H1 (cell line): ENCODE measurements at regions of chr19 and their contacts with region 1.

Region 1: GRCh38 chr19:11380653-11381534 is 3.2 kb downstream of the EPOR start:
- DNase-seq: peak; percentile 93 to 95
- H3K4me3 ChIP-seq: peak overlapping the region; percentile 55 to 79 (median 69)
- H3K27ac ChIP-seq: peak overlapping the region; percentile 76; the same call in 1 of the 2 replicates
- H3K4me1 ChIP-seq: peaks cover 0 to 11% (median 5%) of the 10 kb centered on the region in 4 experiments; a peak in 5 of 7 replicates
- H3K27me3 ChIP-seq: no peaks in the 10 kb centered on the region
- CTCF ChIP-seq: peak; percentile 60 to 71 (median 67)
- EP300 ChIP-seq: no peak; a peak in 1 of 3 replicates
- POLR2A ChIP-seq: peak; percentile 81 to 85
- RAD21 ChIP-seq: peak; percentile 50 to 66

Region 2: DNA sequence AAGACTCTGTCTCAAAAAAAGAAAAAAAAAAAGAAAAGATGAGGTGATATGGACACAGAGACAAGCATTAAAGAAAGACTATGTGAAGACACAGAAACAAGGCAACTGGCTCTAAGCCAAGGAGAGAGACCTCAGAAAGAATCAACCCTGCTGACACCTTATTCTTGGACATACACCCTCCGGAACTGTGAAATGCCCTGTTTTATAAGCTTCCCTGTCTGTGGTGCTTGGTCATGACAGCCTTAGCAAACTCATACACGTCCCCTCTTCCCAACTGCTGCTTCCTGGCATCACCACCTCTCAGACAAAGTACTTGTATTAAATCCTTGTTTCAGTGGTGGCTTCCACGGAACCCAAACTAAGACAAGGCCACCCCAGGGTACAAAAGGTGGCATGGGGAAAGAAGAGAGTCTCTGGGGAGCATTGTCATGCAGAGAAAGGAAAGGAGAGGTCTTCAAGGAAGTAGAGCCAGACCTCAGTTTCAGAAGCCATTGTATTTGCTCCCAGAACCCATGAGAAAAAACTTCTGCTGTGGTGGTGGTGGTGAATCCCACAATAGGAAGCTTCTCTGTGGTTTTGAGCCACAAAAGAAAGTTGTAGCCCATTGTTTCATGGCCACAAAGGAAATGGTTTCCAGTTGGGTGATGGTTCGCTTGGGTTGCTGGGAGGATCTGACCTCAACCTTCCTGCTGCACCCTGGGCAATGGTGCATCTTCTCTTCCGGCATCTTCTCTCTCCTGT is 101.2 kb before region 1 on chr19:
- CTCF ChIA-PET with region 1: no interaction called
- POLR2A ChIA-PET with region 1: no interaction called
- DNase-seq: no peak
- H3K4me3 ChIP-seq: no peak overlapping the region
- H3K27ac ChIP-seq: no peak overlapping the region
- H3K4me1 ChIP-seq: peaks cover 0 to 4% (median 2%) of the 10 kb centered on the region in 4 experiments; a peak in 4 of 7 replicates
- H3K27me3 ChIP-seq: no peaks in the 10 kb centered on the region
- CTCF ChIP-seq: no peak
- EP300 ChIP-seq: no peak
- POLR2A ChIP-seq: no peak
- RAD21 ChIP-seq: no peak

Region 3: GRCh38 chr19:11293433-11294389 is 87.2 kb before region 1 on chr19:
- CTCF ChIA-PET with region 1: interaction called, 20 read pairs
- POLR2A ChIA-PET with region 1: interaction called, 3 read pairs
- DNase-seq: peak; percentile 88 to 100
- H3K4me3 ChIP-seq: peak overlapping the region in 2 of 4 experiments; percentile 21 to 44; a peak in 4 of 8 replicates
- H3K27ac ChIP-seq: no peak overlapping the region
- H3K4me1 ChIP-seq: peaks cover 2 to 6% (median 2%) of the 10 kb centered on the region in 4 experiments; a peak in 5 of 7 replicates
- H3K27me3 ChIP-seq: no peaks in the 10 kb centered on the region; a peak in 2 of 7 replicates
- CTCF ChIP-seq: peak; percentile 92 to 97 (median 93)
- EP300 ChIP-seq: no peak
- POLR2A ChIP-seq: no peak
- RAD21 ChIP-seq: peak; percentile 92 to 94

Region 4: GRCh38 chr19:11339254-11340098 is 41.4 kb before region 1 on chr19 and contains the start of gene RAB3D:
- CTCF ChIA-PET with region 1: interaction called, 8 read pairs
- POLR2A ChIA-PET with region 1: interaction called, 13 read pairs
- DNase-seq: peak; percentile 79 to 94
- H3K4me3 ChIP-seq: peak within 1 kb of the TSS; percentile 47 to 77 (median 62)
- H3K27ac ChIP-seq: no peak within 1 kb of the TSS
- H3K4me1 ChIP-seq: peaks cover 0 to 4% (median 1%) of the 10 kb centered on the region in 4 experiments; a peak in 4 of 7 replicates
- H3K27me3 ChIP-seq: no peaks in the 10 kb centered on the region; a peak in 2 of 7 replicates
- CTCF ChIP-seq: no peak
- EP300 ChIP-seq: no peak
- POLR2A ChIP-seq: peak in 1 of 2 experiments; percentile 60; a peak in 2 of 3 replicates
- RAD21 ChIP-seq: 0 out of 4 replicates have a peak, but pooled peaks of 1 of the 2 experiments have one; percentile 3
- total RNA-seq, gene RAB3D: 23.8 and 24.4 TPM in 2 replicates

Region 5: GRCh38 chr19:11393786-11394185 is 12.9 kb after region 1 on chr19:
- CTCF ChIA-PET with region 1: interaction called, 23 read pairs
- POLR2A ChIA-PET with region 1: interaction called, 16 read pairs
- DNase-seq: no peak
- H3K4me3 ChIP-seq: no peak overlapping the region
- H3K27ac ChIP-seq: no peak overlapping the region
- H3K4me1 ChIP-seq: peaks cover 0 to 2% (median 0%) of the 10 kb centered on the region in 4 experiments; a peak in 1 of 7 replicates
- H3K27me3 ChIP-seq: no peaks in the 10 kb centered on the region
- CTCF ChIP-seq: no peak
- EP300 ChIP-seq: no peak
- POLR2A ChIP-seq: no peak
- RAD21 ChIP-seq: no peak

Region 6: DNA sequence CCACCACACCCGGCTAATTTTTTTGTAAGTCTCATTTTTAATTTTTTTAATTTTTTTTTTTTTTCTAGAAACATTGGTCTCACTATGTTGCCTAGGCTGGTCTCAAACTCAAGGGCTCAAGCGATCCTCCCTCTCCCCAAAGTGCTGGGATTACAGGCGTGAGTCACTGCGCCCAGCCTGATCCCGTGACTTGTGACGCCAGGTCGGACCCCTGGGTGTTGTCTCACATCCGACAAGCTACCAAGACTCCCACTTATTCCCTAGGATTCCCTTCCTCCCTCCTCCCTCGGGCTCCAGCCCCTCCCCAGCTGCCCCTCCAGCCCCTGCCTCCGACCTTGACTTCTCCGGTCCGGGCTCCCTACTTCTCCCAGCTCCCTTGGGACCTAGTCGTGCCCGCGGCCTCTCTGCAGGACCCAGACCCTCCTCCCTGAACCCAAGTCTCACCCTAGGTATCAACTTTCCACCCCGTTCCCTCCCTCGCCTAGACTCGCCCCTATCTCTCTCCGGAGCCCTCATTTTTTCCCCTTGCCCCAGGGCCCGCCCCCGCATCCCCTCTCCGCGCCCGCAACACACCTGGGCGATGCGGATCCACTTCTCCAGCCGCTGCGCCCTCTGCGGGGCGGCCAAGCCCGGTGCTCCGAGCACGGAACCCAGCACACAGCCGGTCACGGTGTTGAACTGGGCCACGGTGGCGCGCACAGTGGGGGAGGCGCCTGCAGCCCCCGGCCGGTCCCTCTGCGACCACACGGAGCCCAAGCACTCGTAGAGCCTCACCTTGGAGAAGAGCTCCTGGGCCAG is 25.2 kb after region 1 on chr19:
- CTCF ChIA-PET with region 1: interaction called, 69 read pairs
- POLR2A ChIA-PET with region 1: interaction called, 11 read pairs
- DNase-seq: peak in 1 of 2 experiments; percentile 87
- H3K4me3 ChIP-seq: peak overlapping the region in 1 of 4 experiments; percentile 47; a peak in 2 of 8 replicates
- H3K27ac ChIP-seq: 0 out of 2 replicates have a peak overlapping the region, but pooled peaks have one; percentile 49
- H3K4me1 ChIP-seq: peaks cover 0 to 6% (median under 1%) of the 10 kb centered on the region in 4 experiments; a peak in 4 of 7 replicates
- H3K27me3 ChIP-seq: no peaks in the 10 kb centered on the region
- CTCF ChIP-seq: peak; percentile 57 to 69 (median 63)
- EP300 ChIP-seq: no peak
- POLR2A ChIP-seq: no peak
- RAD21 ChIP-seq: peak; percentile 48 to 69; a peak in 3 of 4 replicates

Region 7: DNA sequence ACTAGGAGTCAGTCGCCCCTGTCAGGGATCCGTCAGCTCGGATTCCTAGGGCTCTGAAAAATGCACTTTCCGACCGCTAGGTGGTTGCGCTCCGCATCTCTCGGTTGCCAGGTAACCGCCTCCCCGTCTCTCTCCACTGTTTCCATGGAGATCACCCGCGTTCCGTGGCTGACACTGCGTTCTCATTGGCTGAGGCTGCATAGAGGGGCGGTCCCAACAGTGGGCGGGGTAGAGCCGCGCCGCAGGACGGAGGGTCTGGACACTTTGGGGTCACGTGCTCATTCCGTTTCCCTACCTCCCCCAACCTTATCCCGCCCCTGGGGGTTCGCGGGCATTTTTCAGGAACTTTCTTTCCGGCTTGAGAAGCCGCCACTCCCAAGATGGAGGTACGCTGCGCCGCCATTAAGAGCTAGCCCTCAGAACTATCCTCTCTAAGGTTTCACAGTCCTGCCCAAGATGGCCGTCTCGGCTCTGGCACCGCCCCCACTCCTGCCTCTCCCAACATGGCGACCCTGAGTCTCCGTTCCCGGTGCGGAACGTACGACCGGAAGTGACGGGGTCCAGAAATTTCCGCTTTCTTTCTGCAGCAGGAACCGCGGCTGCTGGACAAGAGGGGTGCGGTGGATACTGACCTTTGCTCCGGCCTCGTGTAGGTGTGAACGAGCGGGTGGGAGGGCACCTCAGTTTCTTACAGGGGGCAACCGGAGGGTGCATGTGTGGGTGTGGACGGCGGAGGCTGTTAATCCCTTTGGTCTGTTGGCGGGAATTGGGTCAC is 54.4 kb after region 1 on chr19 and contains the starts of genes ODAD3 and PRKCSH:
- CTCF ChIA-PET with region 1: interaction called, 192 read pairs
- POLR2A ChIA-PET with region 1: interaction called, 14 read pairs
- DNase-seq: peak; percentile 98 to 99
- H3K4me3 ChIP-seq: peak within 1 kb of the TSS; percentile 86 to 99 (median 93)
- H3K27ac ChIP-seq: peak within 1 kb of the TSS; percentile 91
- H3K4me1 ChIP-seq: peaks cover 0 to 13% (median 7%) of the 10 kb centered on the region in 4 experiments; a peak in 5 of 7 replicates
- H3K27me3 ChIP-seq: no peaks in the 10 kb centered on the region
- CTCF ChIP-seq: peak; percentile 84 to 95 (median 86)
- EP300 ChIP-seq: peak in 1 of 2 experiments; percentile 51; a peak in 1 of 3 replicates
- POLR2A ChIP-seq: peak in 1 of 2 experiments; percentile 88; a peak in 2 of 3 replicates
- RAD21 ChIP-seq: peak; percentile 27 to 34; a peak in 2 of 4 replicates
- total RNA-seq, gene ODAD3: 1.6 and 2.2 TPM in 2 replicates
- total RNA-seq, gene PRKCSH: 337 and 341 TPM in 2 replicates

Region 8: GRCh38 chr19:11453468-11454341 is 72.8 kb after region 1 on chr19:
- CTCF ChIA-PET with region 1: interaction called, 18 read pairs
- POLR2A ChIA-PET with region 1: interaction called, 5 read pairs
- DNase-seq: peak in 1 of 2 experiments; percentile 70
- H3K4me3 ChIP-seq: no peak overlapping the region
- H3K27ac ChIP-seq: no peak overlapping the region
- H3K4me1 ChIP-seq: peaks cover 2 to 21% (median 7%) of the 10 kb centered on the region in 4 experiments
- H3K27me3 ChIP-seq: no peaks in the 10 kb centered on the region
- CTCF ChIP-seq: peak; percentile 66 to 81 (median 69)
- EP300 ChIP-seq: no peak
- POLR2A ChIP-seq: no peak
- RAD21 ChIP-seq: peak; percentile 34 to 56; a peak in 3 of 4 replicates